Activated CD4-positive, alpha-beta memory T cell treated with anti-CD3 and anti-CD28 coated beads, Interleukin-2, amount 10 ng/mL, durations not matched to agents 7 days and 5 days (primary cell): ENCODE measurements at regions of chr11 and their contacts with region 1.

Region 1: DNA sequence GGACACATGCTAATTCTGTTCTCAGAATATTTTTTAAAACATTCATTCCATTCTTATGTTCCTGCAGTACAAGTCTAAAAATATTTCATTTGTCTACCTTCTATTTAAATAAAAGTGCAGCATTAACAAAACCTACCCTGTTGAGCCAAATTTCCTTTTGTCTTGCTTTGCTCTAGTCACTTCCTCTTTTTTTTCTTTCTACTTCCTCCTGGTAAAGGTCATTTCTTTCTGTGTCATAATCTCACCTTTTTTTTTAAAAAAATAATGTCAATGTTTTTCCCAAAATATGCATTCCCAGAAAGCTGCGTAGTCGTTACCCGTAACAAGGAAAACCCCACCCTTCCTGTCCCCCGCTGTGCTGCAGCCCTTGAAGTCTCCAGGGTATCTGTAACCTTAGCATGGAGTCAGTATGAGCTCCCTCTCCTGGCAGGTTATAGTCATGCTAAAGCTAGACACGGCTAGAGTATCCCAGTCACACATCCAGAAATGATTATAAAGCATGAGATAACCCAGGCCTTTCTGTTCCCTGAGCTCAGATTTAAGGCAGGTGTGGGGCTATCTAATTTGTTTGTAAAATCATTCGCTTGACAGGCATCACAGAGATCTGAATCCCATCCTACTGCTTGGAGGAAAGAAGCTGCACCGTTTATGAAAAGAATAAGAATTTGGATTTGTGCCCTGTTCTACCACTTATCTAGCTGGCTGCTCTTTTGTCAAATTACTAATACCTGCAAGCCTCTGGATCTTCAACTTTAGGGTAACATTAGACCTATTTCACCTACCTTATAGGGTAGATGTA is 51.1 kb upstream of the EED start:
- DNase-seq: peak; percentile 78
- H3K4me3 Mint-ChIP-seq: peak overlapping the region; percentile 60
- H3K27ac Mint-ChIP-seq: peak overlapping the region; percentile 80
- H3K4me1 Mint-ChIP-seq: peaks cover 57% of the 10 kb centered on the region
- H3K27me3 Mint-ChIP-seq: peaks cover 2% of the 10 kb centered on the region

Region 2: GRCh38 chr11:85947431-85948272 is 245.8 kb before region 1 on chr11:
- CTCF ChIA-PET with region 1: no interaction called
- POLR2A ChIA-PET with region 1: no interaction called
- DNase-seq: no peak
- H3K4me3 Mint-ChIP-seq: no peak overlapping the region
- H3K27ac Mint-ChIP-seq: peak overlapping the region; percentile 60
- H3K4me1 Mint-ChIP-seq: peaks cover 49% of the 10 kb centered on the region
- H3K27me3 Mint-ChIP-seq: no peaks in the 10 kb centered on the region

Region 3: GRCh38 chr11:86035164-86035563 is 158.3 kb before region 1 on chr11:
- CTCF ChIA-PET with region 1: interaction called, 76 read pairs
- POLR2A ChIA-PET with region 1: no interaction called
- DNase-seq: no peak
- H3K4me3 Mint-ChIP-seq: no peak overlapping the region
- H3K27ac Mint-ChIP-seq: no peak overlapping the region
- H3K4me1 Mint-ChIP-seq: peaks cover 39% of the 10 kb centered on the region
- H3K27me3 Mint-ChIP-seq: no peaks in the 10 kb centered on the region

Region 4: DNA sequence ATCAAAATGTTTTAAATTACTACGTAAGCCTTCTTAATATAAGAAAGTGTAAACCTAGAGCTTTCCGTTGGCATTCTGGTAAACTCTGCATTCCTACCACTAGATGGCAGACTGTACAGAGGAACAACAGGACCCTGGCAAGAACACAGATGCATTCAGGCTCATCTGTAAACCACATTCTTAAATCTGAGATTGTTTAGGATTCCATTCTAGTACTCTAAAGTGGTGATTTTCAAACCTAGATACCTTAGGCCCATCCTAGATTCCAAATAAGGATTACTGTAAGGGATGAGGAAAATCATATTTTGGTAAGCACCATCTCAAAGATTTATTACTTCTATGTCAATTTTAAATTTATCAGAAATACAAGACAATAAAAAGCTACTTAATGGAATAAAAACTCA is 151.5 kb before region 1 on chr11:
- CTCF ChIA-PET with region 1: interaction called, 76 read pairs
- POLR2A ChIA-PET with region 1: interaction called, 16 read pairs
- DNase-seq: peak; percentile 52
- H3K4me3 Mint-ChIP-seq: no peak overlapping the region
- H3K27ac Mint-ChIP-seq: peak overlapping the region; percentile 1
- H3K4me1 Mint-ChIP-seq: peaks cover 67% of the 10 kb centered on the region
- H3K27me3 Mint-ChIP-seq: no peaks in the 10 kb centered on the region

Region 5: DNA sequence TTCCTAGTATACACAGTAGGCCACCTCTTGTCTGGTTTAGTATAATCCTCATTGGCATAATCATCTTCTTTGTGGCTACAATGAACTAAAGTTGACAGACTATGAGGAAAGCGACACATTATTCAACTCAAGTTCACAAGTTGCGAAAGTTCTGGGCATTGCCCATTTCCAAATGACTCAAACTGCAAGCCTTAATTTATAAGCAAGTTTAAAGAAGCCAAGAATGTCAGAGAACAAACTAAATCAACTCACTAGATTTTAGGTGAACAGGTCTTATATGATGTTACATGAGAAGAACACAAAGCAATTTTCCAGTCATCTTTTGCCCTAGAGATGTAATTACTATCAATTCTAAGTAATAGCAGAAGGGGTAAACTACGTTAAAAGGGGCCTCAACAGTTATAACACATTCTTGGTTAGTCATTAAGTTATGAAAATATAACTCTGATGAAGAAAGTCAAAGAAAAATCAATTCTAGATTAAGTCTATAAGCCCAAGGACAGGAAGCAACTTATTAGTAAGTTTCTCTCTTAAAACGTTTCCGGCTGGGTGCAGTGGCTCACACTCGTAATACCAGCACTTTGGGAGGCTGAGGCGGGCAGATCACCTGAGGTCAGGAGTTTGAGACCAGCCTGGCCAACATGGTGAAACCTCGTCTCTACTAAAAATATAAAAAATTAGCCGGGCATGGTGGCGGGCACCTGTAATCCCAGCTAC is 146.1 kb before region 1 on chr11:
- CTCF ChIA-PET with region 1: interaction called, 76 read pairs
- POLR2A ChIA-PET with region 1: interaction called, 16 read pairs
- DNase-seq: peak; percentile 65
- H3K4me3 Mint-ChIP-seq: peak overlapping the region; percentile 65
- H3K27ac Mint-ChIP-seq: peak overlapping the region; percentile 91
- H3K4me1 Mint-ChIP-seq: peaks cover 90% of the 10 kb centered on the region
- H3K27me3 Mint-ChIP-seq: no peaks in the 10 kb centered on the region

Region 6: DNA sequence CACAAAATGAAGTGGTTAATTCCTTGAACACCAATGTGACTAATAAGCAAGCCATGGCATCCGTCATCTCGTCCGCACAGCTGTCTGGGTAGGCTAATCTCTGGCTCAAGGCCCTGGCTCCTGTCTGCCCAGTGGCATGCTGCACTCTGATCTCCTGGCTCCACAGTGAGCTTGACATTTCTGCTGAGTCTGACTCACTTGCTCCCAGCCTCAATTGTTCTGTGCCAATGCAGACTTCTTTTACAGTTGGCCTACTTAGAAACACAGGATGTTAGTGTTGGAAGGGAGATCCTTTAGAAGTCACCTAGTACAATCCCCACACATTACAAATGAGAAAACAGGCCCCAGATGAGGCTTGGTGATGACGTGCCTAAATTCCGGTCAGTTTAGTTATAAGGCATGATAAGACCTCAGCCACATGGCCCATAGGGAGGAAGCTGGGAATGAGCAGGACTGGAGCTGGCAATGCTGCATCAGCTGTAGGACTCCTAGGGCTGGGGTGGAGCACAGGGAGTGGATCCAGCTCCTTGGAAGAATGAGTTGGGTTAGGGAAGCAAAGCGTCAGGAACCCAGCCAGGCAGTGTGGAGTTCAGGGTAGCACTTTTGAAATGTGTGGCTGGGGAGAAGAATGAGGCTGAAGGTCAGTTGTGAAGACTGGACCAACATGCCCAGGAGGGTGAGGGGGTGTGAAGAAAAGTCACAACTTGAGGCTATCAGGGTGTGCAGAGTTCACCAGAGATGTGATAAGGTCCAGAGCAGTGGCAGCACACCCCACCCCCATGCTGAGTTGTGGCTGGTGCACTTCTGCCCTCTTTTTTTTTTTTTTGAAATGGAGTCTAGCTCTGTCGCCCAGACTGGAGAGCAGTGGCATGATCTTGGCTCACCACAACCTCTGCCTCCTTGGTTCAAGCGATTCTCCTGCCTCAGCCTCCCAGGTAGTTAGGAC is 19.1 kb before region 1 on chr11:
- CTCF ChIA-PET with region 1: interaction called, 18 read pairs
- POLR2A ChIA-PET with region 1: interaction called, 14 read pairs
- DNase-seq: no peak
- H3K4me3 Mint-ChIP-seq: no peak overlapping the region
- H3K27ac Mint-ChIP-seq: peak overlapping the region; percentile 16
- H3K4me1 Mint-ChIP-seq: no peaks in the 10 kb centered on the region
- H3K27me3 Mint-ChIP-seq: no peaks in the 10 kb centered on the region

Region 7: DNA sequence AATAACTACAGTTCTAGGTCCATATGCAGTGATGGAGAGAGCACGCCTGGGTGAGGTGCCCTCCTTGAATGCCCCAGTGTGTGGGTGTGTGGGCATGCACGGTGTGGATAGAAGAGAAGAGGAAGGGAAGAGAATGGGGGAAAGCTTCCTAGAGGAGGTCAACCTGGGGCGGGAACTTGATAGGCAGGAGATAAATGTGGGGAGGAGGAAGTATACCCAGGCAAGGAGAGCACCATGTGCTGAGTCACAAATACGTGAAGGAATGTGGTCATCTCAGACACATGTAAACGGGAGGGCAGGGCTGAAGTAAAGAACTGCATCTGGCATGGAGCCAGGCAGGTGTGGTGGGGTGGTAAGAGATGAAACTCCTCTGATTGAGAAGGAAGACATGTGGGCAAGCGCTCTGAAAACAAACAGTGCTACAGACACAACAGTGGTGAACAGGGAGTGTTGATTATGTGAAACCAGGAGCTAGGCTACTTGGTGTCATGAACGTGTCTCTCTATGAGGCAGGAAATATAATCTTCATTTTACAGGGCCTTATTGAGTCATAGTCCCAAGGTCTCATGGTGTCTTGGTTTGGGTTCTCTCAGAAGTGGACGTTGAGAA is 10.4 kb before region 1 on chr11:
- CTCF ChIA-PET with region 1: interaction called, 30 read pairs
- POLR2A ChIA-PET with region 1: interaction called, 5 read pairs
- DNase-seq: peak; percentile 76
- H3K4me3 Mint-ChIP-seq: no peak overlapping the region
- H3K27ac Mint-ChIP-seq: no peak overlapping the region
- H3K4me1 Mint-ChIP-seq: peaks cover 3% of the 10 kb centered on the region
- H3K27me3 Mint-ChIP-seq: no peaks in the 10 kb centered on the region

Region 8: GRCh38 chr11:86259730-86260129 is 66.2 kb after region 1 on chr11:
- CTCF ChIA-PET with region 1: no interaction called
- POLR2A ChIA-PET with region 1: no interaction called
- DNase-seq: no peak
- H3K4me3 Mint-ChIP-seq: no peak overlapping the region
- H3K27ac Mint-ChIP-seq: no peak overlapping the region
- H3K4me1 Mint-ChIP-seq: peaks cover 38% of the 10 kb centered on the region
- H3K27me3 Mint-ChIP-seq: no peaks in the 10 kb centered on the region

Region 9: DNA sequence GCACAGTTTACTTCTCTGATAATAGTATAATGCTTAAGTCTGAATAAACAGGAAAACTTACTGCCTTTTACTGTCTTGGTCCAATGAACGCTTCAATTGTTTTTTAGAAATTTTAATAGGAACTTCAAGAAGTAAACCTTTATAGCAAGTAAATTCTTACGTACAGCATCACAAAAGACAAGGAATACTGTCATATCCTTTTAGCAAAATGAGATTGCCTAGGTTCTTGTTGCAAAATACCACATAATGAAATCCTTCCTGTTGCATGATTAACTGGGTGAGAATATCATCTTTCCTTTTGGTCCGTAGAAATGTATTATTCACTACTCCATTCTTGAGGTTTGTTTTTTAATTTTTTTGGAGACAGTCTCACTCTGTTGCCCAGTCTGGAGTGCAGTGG is 86.3 kb after region 1 on chr11:
- CTCF ChIA-PET with region 1: no interaction called
- POLR2A ChIA-PET with region 1: no interaction called
- DNase-seq: no peak
- H3K4me3 Mint-ChIP-seq: no peak overlapping the region
- H3K27ac Mint-ChIP-seq: no peak overlapping the region
- H3K4me1 Mint-ChIP-seq: peaks cover 30% of the 10 kb centered on the region
- H3K27me3 Mint-ChIP-seq: no peaks in the 10 kb centered on the region

Region 10: GRCh38 chr11:86291466-86292262 is 98.2 kb after region 1 on chr11:
- CTCF ChIA-PET with region 1: interaction called, 13 read pairs
- POLR2A ChIA-PET with region 1: no interaction called
- DNase-seq: peak; percentile 65
- H3K4me3 Mint-ChIP-seq: no peak overlapping the region
- H3K27ac Mint-ChIP-seq: peak overlapping the region; percentile 74
- H3K4me1 Mint-ChIP-seq: peaks cover 59% of the 10 kb centered on the region
- H3K27me3 Mint-ChIP-seq: no peaks in the 10 kb centered on the region